ENCODE measurements at regions of chr19 and their contacts with region 1.

Region 1: GRCh38 chr19:45862564-45863334 is at the start of gene SYMPK:
- DNase-seq: peak; percentile 98 to 99 (median 99)
- H3K4me3 ChIP-seq: peak within 1 kb of the TSS; percentile 66 to 84
- H3K4me3 Mint-ChIP-seq: peak within 1 kb of the TSS; percentile 88 to 100 (median 97)
- H3K27ac ChIP-seq: peak within 1 kb of the TSS; percentile 85
- H3K27ac Mint-ChIP-seq: peak within 1 kb of the TSS; percentile 68 to 100 (median 97)
- H3K4me1 ChIP-seq: peaks cover 23% of the 10 kb centered on the region
- H3K4me1 Mint-ChIP-seq: peaks cover 19 to 42% (median 28%) of the 10 kb centered on the region in 4 donors
- H3K27me3 ChIP-seq: no peaks in the 10 kb centered on the region
- H3K27me3 Mint-ChIP-seq: peaks cover 1 to 6% of the 10 kb centered on the region in 2 donors
- total RNA-seq, gene SYMPK: 93.9 to 98.2 TPM

Region 2: GRCh38 chr19:45584332-45585157 is 278.2 kb before region 1 on chr19 and contains the start of gene OPA3:
- CTCF ChIA-PET with region 1: no interaction called
- POLR2A ChIA-PET with region 1: no interaction called
- intact Hi-C with region 1: loop called (anchors 1 kb)
- DNase-seq: peak; percentile 98 to 100 (median 99)
- H3K4me3 ChIP-seq: peak within 1 kb of the TSS; percentile 84 to 99
- H3K4me3 Mint-ChIP-seq: peak within 1 kb of the TSS; percentile 87 to 97 (median 93)
- H3K27ac ChIP-seq: peak within 1 kb of the TSS; percentile 99
- H3K27ac Mint-ChIP-seq: peak within 1 kb of the TSS; percentile 93 to 100 (median 98)
- H3K4me1 ChIP-seq: peaks cover 11% of the 10 kb centered on the region
- H3K4me1 Mint-ChIP-seq: peaks cover 7 to 26% (median 16%) of the 10 kb centered on the region in 4 donors
- H3K27me3 ChIP-seq: no peaks in the 10 kb centered on the region
- H3K27me3 Mint-ChIP-seq: peaks cover 1 to 4% of the 10 kb centered on the region in 2 donors
- total RNA-seq, gene OPA3: 9.9 to 10.8 TPM

Region 3: DNA sequence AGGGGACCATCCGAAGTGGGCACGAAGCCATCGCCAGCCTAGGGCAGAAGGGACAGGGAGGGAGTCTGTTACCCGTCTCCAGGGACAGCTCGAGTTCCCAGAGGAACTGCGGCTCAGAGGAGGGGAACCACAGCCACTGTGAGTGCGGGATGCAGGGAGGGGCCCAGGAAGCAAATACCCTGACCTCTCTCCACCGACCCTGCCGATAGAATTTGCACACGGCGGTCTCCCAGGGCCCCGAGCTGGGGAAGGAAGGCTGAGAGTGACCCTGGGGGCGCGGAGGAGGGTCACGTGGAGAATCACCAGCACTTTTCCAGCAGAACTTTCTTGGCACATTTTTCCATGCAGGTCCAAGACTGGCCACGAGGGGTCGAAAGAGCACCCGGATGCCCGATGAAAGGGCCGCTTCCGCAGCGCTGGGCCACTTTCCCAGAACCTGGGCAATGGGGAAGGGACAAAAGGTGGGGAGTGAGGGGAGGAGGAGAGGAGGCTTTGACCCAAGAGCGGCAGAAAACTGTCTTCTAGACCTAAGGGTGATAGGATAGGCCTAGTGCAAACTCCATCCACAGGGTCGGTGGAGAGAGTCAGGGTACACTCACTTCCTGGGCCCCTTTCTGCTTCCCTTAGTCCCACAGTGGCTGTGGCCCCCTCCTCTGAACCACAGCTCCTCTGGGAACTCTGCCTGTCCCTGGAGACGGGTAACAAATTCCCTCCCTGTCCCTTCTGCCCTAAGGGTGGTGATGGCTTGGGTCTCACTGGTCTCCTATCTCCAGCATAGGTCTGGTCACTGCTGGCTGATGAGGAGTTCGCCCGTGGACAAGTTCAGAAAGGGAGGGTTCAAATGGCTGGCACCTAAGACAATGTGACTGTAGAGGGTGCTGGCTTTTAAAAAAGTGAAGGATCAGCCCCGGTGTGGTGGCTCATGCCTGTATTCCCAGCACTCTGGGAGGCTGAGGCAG is 255.4 kb before region 1 on chr19:
- CTCF ChIA-PET with region 1: no interaction called
- POLR2A ChIA-PET with region 1: no interaction called
- intact Hi-C with region 1: no loop called
- DNase-seq: peak in 4 of 5 donors; percentile 14 to 36 (median 20)
- H3K4me3 ChIP-seq: no peak overlapping the region
- H3K4me3 Mint-ChIP-seq: peak overlapping the region in 3 of 8 donors; percentile 44 to 65 (median 54)
- H3K27ac ChIP-seq: no peak overlapping the region
- H3K27ac Mint-ChIP-seq: peak overlapping the region in 4 of 7 donors; percentile 4 to 89 (median 42)
- H3K4me1 ChIP-seq: peaks cover 9% of the 10 kb centered on the region
- H3K4me1 Mint-ChIP-seq: peaks cover 5 to 11% (median 8%) of the 10 kb centered on the region in 4 donors
- H3K27me3 ChIP-seq: peaks cover 2% of the 10 kb centered on the region
- H3K27me3 Mint-ChIP-seq: peaks cover 7 to 9% of the 10 kb centered on the region in 2 donors

Region 4: DNA sequence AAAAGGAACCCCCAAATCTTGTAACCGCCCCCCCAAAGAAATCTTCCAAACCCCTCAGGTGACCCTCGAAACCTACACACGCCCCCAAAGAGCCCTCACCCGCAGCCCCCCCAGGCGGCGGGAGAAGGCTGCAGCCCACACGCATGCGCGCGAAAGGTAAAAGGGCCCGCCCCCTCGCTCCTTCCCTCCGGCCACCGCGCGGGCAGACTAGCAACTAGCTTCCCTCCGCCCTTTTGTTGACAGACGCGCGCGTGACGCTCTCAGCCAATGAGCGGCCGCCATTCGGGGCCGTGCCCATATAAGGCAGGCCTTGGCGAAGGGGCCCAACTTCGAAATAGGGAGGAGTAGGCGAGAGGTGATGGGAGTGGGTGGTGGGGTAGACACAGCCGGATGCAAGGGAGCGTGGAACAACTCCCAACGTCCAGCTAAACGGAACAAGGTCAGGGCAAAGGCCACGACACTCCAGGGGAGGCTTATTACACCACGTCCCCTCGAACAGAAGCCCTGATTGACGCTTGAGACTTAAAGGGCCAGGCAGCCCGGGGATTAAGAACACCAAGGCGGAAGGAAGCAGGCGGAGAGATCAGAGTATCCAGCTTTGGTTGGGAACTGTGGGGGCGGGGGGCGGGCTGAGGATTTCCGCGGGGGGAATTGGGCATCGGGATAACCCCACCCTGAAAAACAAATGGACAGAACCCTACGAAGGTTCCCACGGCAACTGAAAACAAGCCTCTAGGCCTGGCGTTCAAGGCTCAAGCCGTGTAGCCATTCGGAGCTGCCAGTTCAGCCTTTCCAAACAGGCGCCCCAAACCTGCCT is 145.4 kb before region 1 on chr19:
- CTCF ChIA-PET with region 1: interaction called, 3 read pairs
- POLR2A ChIA-PET with region 1: interaction called, 6 read pairs
- intact Hi-C with region 1: loop called (anchors 1 kb)
- DNase-seq: peak; percentile 97 to 99 (median 98)
- H3K4me3 ChIP-seq: peak overlapping the region; percentile 72 to 90
- H3K4me3 Mint-ChIP-seq: peak overlapping the region; percentile 92 to 99 (median 97)
- H3K27ac ChIP-seq: peak overlapping the region; percentile 86
- H3K27ac Mint-ChIP-seq: peak overlapping the region; percentile 84 to 99 (median 98)
- H3K4me1 ChIP-seq: peaks cover 38% of the 10 kb centered on the region
- H3K4me1 Mint-ChIP-seq: peaks cover 32 to 59% (median 39%) of the 10 kb centered on the region in 4 donors
- H3K27me3 ChIP-seq: no peaks in the 10 kb centered on the region
- H3K27me3 Mint-ChIP-seq: no peaks in the 10 kb centered on the region

Region 5: GRCh38 chr19:45739498-45740439 is 123.0 kb before region 1 on chr19:
- CTCF ChIA-PET with region 1: no interaction called
- POLR2A ChIA-PET with region 1: no interaction called
- intact Hi-C with region 1: no loop called
- DNase-seq: no peak
- H3K4me3 ChIP-seq: no peak overlapping the region
- H3K4me3 Mint-ChIP-seq: no peak overlapping the region
- H3K27ac ChIP-seq: no peak overlapping the region
- H3K27ac Mint-ChIP-seq: peak overlapping the region in 1 of 7 donors; percentile 31
- H3K4me1 ChIP-seq: no peaks in the 10 kb centered on the region
- H3K4me1 Mint-ChIP-seq: no peaks in the 10 kb centered on the region
- H3K27me3 ChIP-seq: no peaks in the 10 kb centered on the region
- H3K27me3 Mint-ChIP-seq: peaks cover 7 to 8% of the 10 kb centered on the region in 2 donors

Region 6: DNA sequence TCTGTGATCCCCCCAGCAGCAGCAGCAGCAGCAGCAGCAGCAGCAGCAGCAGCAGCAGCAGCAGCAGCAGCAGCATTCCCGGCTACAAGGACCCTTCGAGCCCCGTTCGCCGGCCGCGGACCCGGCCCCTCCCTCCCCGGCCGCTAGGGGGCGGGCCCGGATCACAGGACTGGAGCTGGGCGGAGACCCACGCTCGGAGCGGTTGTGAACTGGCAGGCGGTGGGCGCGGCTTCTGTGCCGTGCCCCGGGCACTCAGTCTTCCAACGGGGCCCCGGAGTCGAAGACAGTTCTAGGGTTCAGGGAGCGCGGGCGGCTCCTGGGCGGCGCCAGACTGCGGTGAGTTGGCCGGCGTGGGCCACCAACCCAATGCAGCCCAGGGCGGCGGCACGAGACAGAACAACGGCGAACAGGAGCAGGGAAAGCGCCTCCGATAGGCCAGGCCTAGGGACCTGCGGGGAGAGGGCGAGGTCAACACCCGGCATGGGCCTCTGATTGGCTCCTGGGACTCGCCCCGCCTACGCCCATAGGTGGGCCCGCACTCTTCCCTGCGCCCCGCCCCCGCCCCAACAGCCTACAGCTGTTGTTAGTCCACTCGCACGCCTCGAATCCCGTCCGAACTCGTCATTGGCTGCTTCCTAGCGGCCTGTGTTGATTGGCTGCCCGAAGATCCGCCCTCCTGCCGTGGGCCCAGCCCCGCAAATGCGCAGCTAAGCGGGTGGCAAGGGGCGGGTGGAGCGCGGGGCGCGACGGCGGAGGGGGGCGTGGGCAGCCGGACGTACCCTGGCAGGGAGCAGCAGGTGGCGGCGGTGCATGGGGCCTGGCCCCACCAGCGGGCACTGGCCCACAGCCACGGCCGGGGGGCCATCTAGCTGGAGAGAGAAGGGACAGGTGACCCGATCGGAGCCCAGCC is 92.3 kb before region 1 on chr19:
- CTCF ChIA-PET with region 1: interaction called, 5 read pairs
- POLR2A ChIA-PET with region 1: interaction called, 19 read pairs
- intact Hi-C with region 1: loop called (anchors 1 kb)
- DNase-seq: peak; percentile 89 to 93 (median 91)
- H3K4me3 ChIP-seq: peak overlapping the region; percentile 57 to 71
- H3K4me3 Mint-ChIP-seq: peak overlapping the region; percentile 84 to 92 (median 86)
- H3K27ac ChIP-seq: peak overlapping the region; percentile 15
- H3K27ac Mint-ChIP-seq: peak overlapping the region; percentile 61 to 94 (median 88)
- H3K4me1 ChIP-seq: peaks cover 22% of the 10 kb centered on the region
- H3K4me1 Mint-ChIP-seq: peaks cover 1 to 30% (median 5%) of the 10 kb centered on the region in 4 donors
- H3K27me3 ChIP-seq: no peaks in the 10 kb centered on the region
- H3K27me3 Mint-ChIP-seq: peaks cover 1 to 6% of the 10 kb centered on the region in 2 donors

Region 7: GRCh38 chr19:45817010-45817724 is 45.6 kb before region 1 on chr19:
- CTCF ChIA-PET with region 1: interaction called, 6 read pairs
- POLR2A ChIA-PET with region 1: interaction called, 6 read pairs
- intact Hi-C with region 1: loop called (anchors 1 kb)
- DNase-seq: peak; percentile 92 to 95 (median 92)
- H3K4me3 ChIP-seq: no peak overlapping the region
- H3K4me3 Mint-ChIP-seq: peak overlapping the region in 2 of 8 donors; percentile 28 to 62
- H3K27ac ChIP-seq: no peak overlapping the region
- H3K27ac Mint-ChIP-seq: peak overlapping the region in 5 of 7 donors; percentile 36 to 89 (median 74)
- H3K4me1 ChIP-seq: peaks cover 4% of the 10 kb centered on the region
- H3K4me1 Mint-ChIP-seq: peaks cover 0 to 6% (median 4%) of the 10 kb centered on the region in 4 donors
- H3K27me3 ChIP-seq: no peaks in the 10 kb centered on the region
- H3K27me3 Mint-ChIP-seq: no peaks in the 10 kb centered on the region

Region 8: DNA sequence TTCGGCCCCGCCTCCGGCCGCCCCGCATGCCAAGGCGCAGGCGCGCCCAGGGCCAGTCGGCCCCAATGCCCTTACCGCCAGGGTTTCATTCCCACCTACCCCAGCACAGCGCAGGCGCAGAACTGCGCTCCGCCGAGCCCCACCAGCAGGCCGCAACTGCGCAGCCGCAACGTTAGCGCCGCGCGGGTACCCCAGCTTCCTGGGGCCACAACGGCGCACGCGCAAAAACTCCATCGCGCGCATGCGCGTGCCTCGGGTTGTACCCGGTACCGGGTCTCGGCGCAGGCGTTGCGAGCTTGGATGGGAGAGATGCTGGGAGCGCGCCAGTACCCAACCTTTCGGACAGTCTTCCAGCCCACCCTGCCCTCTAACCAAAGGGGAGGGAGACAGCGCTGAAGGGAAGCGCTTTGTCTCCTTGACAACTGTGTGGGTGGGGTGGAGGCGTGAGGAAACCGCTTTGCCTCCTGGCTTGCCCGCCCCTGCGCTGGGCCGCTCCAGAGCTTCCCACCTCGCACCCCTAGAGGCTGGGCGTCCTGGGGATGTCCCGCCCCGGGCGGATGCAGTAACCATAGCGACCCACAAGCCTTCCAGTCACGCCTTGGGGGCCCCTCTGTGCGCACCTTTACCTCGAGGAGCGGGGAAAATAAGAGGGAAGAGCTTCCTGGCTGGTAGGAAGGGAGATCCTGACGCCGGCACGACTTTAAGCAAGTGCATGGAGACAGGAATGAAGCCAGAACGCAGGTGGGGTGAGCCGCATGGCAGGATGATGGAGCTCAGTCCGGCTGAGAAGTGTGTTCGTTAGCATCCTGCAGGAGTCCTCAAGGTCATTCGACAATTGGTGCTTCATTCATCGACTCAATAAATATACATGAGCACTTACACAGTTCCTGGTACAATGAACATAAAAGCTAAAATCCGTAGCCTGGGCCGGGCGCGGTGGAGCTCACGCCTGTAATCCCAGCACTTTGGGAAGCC is 40.2 kb after region 1 on chr19:
- CTCF ChIA-PET with region 1: interaction called, 14 read pairs
- POLR2A ChIA-PET with region 1: interaction called, 24 read pairs
- intact Hi-C with region 1: loop called (anchors 1 kb)
- DNase-seq: peak; percentile 97 to 100 (median 100)
- H3K4me3 ChIP-seq: peak overlapping the region; percentile 86 to 90
- H3K4me3 Mint-ChIP-seq: peak overlapping the region; percentile 83 to 97 (median 95)
- H3K27ac ChIP-seq: peak overlapping the region; percentile 79
- H3K27ac Mint-ChIP-seq: peak overlapping the region; percentile 83 to 96 (median 95)
- H3K4me1 ChIP-seq: peaks cover 19% of the 10 kb centered on the region
- H3K4me1 Mint-ChIP-seq: peaks cover 9 to 32% (median 12%) of the 10 kb centered on the region in 4 donors
- H3K27me3 ChIP-seq: no peaks in the 10 kb centered on the region
- H3K27me3 Mint-ChIP-seq: no peaks in the 10 kb centered on the region

Region 9: GRCh38 chr19:45934551-45935230 is 71.9 kb after region 1 on chr19:
- CTCF ChIA-PET with region 1: no interaction called
- POLR2A ChIA-PET with region 1: no interaction called
- intact Hi-C with region 1: no loop called
- DNase-seq: no peak
- H3K4me3 ChIP-seq: no peak overlapping the region
- H3K4me3 Mint-ChIP-seq: no peak overlapping the region
- H3K27ac ChIP-seq: no peak overlapping the region
- H3K27ac Mint-ChIP-seq: no peak overlapping the region
- H3K4me1 ChIP-seq: no peaks in the 10 kb centered on the region
- H3K4me1 Mint-ChIP-seq: no peaks in the 10 kb centered on the region
- H3K27me3 ChIP-seq: peaks cover 5% of the 10 kb centered on the region
- H3K27me3 Mint-ChIP-seq: peaks cover 20 to 38% of the 10 kb centered on the region in 2 donors

Region 10: DNA sequence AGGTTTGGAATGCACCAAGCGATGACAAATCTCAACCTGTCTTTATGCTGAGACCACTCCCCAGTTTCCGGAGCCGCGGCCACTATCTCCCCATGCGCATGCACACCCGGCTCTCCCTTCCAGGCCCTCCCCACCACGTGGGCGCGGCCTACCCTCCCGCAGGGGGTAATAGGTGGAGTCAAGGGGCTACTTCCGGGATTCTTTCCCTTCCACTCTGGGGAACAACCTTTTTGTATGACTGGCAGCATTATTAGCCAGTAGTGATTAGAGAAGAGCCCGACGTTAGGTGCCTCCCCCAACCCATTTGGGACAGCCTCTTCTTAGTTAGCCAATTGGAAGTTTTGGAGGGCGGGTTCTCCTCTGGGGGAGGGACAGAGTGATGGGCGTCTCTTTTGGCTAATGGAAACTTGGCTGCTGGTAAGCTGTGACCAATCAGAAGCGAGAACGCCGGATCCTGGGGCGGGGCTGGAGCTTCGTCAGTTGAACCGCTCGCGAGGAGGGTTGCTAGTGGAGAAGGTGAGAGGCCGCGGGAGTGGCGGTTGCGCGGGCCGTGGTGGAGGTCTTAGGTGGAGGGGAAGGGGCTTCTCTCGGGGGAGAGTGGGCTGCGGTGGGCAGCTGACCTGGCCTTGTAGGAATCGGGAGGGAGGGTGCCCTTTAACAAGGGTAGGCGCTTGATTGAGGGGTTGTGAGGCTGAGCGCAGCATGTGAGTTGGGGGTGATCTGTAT is 132.4 kb after region 1 on chr19 and contains the start of gene CCDC61:
- CTCF ChIA-PET with region 1: no interaction called
- POLR2A ChIA-PET with region 1: interaction called, 4 read pairs
- intact Hi-C with region 1: loop called (anchors 1 kb)
- DNase-seq: peak; percentile 99 to 100 (median 99)
- H3K4me3 ChIP-seq: peak within 1 kb of the TSS; percentile 75 to 78
- H3K4me3 Mint-ChIP-seq: peak within 1 kb of the TSS in 2 of 8 donors; percentile 26 to 51
- H3K27ac ChIP-seq: peak within 1 kb of the TSS; percentile 88
- H3K27ac Mint-ChIP-seq: peak within 1 kb of the TSS in 1 of 7 donors; percentile 75
- H3K4me1 ChIP-seq: peaks cover 24% of the 10 kb centered on the region
- H3K4me1 Mint-ChIP-seq: peaks cover 9 to 19% (median 17%) of the 10 kb centered on the region in 4 donors
- H3K27me3 ChIP-seq: no peaks in the 10 kb centered on the region
- H3K27me3 Mint-ChIP-seq: peaks cover 2 to 6% of the 10 kb centered on the region in 2 donors
- total RNA-seq, gene CCDC61: 37.4 to 39.6 TPM

Region 11: DNA sequence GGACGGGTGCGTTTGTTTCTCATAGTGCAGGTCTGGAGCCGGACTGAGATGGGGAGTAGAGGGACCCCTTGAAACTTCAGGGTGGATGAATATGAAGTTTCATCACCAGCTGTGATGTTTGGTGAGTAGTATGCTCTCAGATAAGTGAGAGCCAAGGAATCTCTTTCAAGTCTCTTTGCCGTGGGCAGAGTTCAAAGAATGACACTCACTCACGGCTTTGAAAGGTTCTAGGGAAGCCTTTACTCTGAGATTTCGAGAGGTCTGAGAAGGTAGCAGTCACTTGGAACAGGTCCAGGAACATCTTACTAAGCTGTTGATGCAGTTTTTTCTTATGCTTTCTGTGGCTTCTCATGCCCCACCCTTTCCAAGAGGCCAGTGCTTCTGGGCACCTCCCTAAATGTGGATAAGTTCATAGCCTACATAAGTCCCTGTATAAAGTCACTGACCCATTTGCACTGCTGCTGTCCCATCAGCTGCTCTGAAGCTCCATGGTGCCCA is 285.1 kb after region 1 on chr19 and contains the start of gene IGFL2:
- CTCF ChIA-PET with region 1: no interaction called
- POLR2A ChIA-PET with region 1: no interaction called
- intact Hi-C with region 1: no loop called
- DNase-seq: no peak
- H3K4me3 ChIP-seq: no peak within 1 kb of the TSS
- H3K4me3 Mint-ChIP-seq: no peak within 1 kb of the TSS
- H3K27ac ChIP-seq: no peak within 1 kb of the TSS
- H3K27ac Mint-ChIP-seq: peak within 1 kb of the TSS in 1 of 7 donors; percentile 1
- H3K4me1 ChIP-seq: no peaks in the 10 kb centered on the region
- H3K4me1 Mint-ChIP-seq: peaks cover 0 to 2% (median 0%) of the 10 kb centered on the region in 4 donors
- H3K27me3 ChIP-seq: no peaks in the 10 kb centered on the region
- H3K27me3 Mint-ChIP-seq: peaks cover 30 to 39% of the 10 kb centered on the region in 2 donors
- total RNA-seq, gene IGFL2: 0.47 TPM in 1 of 2 experiments, not detected in the other

Measured in CD4-positive, alpha-beta memory T cell (primary cell).